ENCODE measurements at regions of chrX and their contacts with region 1.

Region 1: DNA sequence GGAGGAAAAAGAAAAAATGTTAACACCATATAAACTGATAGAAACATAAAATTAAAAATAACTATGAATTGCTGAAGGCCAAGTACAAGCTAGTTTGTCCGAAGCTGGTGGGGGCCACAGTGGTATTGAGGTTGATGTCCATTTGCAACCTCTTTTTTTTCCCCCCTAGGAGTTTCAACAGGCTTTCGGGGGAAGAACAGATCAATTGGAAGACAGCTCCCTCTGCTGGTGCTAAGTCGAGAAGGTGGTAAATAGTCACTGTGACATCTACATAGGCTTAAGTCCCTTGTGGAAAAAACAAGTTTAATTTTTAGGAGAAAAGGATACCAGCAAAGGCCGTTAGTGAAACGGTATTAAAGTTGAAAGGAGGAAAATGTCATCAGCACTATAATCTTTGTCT is 115.7 kb upstream of the ZXDA start:
- DNase-seq: peak; percentile 21
- H3K4me3 Mint-ChIP-seq: no peak overlapping the region
- H3K27ac Mint-ChIP-seq: no peak overlapping the region
- H3K4me1 Mint-ChIP-seq: peaks cover 2% of the 10 kb centered on the region
- H3K27me3 Mint-ChIP-seq: no peaks in the 10 kb centered on the region

Region 2: GRCh38 chrX:57573754-57574153 is 452.2 kb before region 1 on chrX:
- CTCF ChIA-PET with region 1: interaction called, 3 read pairs
- POLR2A ChIA-PET with region 1: no interaction called
- intact Hi-C with region 1: loop called (anchors 5 kb)
- DNase-seq: peak; percentile 27
- H3K4me3 Mint-ChIP-seq: no peak overlapping the region
- H3K27ac Mint-ChIP-seq: no peak overlapping the region
- H3K4me1 Mint-ChIP-seq: no peaks in the 10 kb centered on the region
- H3K27me3 Mint-ChIP-seq: no peaks in the 10 kb centered on the region

Region 3: GRCh38 chrX:57871463-57871862 is 154.5 kb before region 1 on chrX:
- CTCF ChIA-PET with region 1: no interaction called
- POLR2A ChIA-PET with region 1: no interaction called
- intact Hi-C with region 1: no loop called
- DNase-seq: no peak
- H3K4me3 Mint-ChIP-seq: no peak overlapping the region
- H3K27ac Mint-ChIP-seq: no peak overlapping the region
- H3K4me1 Mint-ChIP-seq: no peaks in the 10 kb centered on the region
- H3K27me3 Mint-ChIP-seq: no peaks in the 10 kb centered on the region

Region 4: DNA sequence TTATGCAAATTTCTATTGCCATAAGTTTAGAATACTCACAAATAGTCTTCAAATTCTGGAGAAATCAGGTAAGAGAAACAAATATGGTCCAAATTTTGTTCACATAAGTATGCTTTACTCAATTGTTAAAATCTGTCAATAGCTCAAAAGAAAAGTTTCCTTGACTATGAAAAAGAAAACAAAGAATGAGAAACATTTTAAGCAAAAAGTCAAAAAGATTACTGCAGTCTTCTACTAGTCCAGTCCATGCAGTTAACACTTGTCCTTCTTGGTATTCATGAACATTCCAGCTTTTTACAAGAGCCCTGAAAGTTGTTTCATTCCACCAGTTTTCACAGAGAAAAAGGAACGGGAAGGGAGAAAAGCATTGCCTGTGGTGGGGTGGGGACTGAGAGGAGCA is 61.0 kb before region 1 on chrX:
- CTCF ChIA-PET with region 1: no interaction called
- POLR2A ChIA-PET with region 1: no interaction called
- intact Hi-C with region 1: no loop called
- DNase-seq: no peak
- H3K4me3 Mint-ChIP-seq: no peak overlapping the region
- H3K27ac Mint-ChIP-seq: no peak overlapping the region
- H3K4me1 Mint-ChIP-seq: no peaks in the 10 kb centered on the region
- H3K27me3 Mint-ChIP-seq: no peaks in the 10 kb centered on the region

Region 5: DNA sequence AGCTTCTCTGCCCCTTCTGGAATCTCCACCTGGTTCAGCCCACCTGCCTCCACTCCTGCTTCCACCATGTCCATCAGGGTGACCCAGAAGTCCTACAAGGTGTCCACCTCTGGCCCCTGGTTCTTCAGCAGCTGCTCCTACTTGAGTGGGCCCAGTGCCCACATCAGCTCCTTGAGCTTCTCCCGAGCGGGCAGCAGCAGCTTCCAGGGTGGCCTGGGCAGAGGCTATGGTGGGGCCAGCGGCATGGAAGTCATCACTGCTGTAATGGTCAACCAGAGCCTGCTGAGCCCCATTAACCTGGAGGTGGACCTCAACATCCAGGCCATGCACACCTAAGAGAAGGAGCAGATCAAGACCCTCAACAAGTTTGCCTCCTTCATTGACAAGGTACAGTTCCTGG is 41.4 kb before region 1 on chrX:
- CTCF ChIA-PET with region 1: no interaction called
- POLR2A ChIA-PET with region 1: no interaction called
- intact Hi-C with region 1: no loop called
- DNase-seq: no peak
- H3K4me3 Mint-ChIP-seq: no peak overlapping the region
- H3K27ac Mint-ChIP-seq: no peak overlapping the region
- H3K4me1 Mint-ChIP-seq: no peaks in the 10 kb centered on the region
- H3K27me3 Mint-ChIP-seq: no peaks in the 10 kb centered on the region

Region 6: DNA sequence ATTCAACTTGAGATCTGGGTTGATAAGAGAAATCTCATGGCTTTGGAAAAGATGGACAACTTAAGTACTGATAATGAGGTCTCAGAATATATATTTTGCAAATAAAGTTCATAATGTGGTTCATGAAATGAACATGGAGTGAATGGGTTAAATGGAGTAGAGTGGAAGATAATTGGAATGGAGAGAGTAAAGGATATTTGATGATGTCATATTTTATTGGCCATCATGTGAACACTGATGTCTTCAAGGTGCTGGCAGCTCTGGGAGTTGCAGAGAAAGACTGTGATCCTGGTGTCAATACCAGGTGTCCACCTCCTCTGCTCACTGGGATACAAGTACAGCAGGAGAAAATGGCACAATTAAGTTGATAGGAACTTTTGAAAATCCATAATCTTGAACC is 18.2 kb after region 1 on chrX:
- CTCF ChIA-PET with region 1: no interaction called
- POLR2A ChIA-PET with region 1: no interaction called
- intact Hi-C with region 1: no loop called
- DNase-seq: no peak
- H3K4me3 Mint-ChIP-seq: no peak overlapping the region
- H3K27ac Mint-ChIP-seq: no peak overlapping the region
- H3K4me1 Mint-ChIP-seq: no peaks in the 10 kb centered on the region
- H3K27me3 Mint-ChIP-seq: peaks cover 2% of the 10 kb centered on the region

Measured in activated CD4-positive, alpha-beta memory T cell treated with anti-CD3 and anti-CD28 coated beads for 36 hours (primary cell).